WTC11 (cell line): ENCODE measurements at regions of chr1 and their contacts with region 1.

Region 1: DNA sequence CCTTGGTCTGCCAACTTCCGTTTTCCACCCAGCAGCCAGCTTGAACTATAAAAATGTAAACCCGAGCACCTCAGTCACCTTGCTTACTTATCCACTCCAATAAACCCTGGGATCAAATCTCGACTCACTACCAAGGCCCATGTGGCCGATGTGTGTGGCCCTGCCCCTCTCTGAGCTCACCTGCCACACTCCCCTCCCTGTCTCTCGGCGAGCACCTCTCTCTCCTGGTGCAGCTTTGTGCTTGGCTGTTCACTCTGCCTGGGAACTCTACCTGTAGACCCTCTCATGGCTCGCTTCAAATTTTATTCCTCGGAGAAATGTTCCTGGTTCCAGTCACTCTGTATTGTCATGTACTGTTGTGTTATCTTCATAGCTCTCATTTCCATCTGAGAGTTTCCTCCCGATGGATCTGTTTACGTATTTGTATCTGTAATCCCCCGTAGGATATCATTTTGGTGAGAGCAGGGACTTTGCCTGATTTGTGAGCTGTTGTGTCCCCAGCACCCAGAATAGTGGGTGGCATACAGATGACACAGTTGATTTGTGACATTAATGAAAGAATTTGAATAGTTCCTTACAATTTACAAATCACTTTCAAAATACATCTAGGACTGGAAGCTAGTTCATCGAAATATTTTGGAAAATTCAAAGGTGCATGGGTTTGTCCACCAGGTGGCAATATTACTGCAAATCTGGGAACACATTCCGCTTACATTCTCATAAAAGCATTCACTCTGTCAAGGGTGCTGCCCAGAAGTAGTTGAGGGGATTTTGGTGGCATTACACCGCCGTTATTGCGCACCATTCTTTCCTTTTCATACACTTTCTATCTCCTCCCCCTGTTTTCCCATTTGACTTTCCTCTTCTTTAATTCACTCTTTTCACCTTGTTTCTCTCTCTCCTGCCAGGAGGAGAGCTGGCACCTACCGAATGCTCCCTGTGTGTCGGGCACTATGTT is 95.3 kb downstream of the ABCA4 start:
- DNase-seq: no peak
- ATAC-seq: peak; percentile 69
- H3K4me3 Mint-ChIP-seq: no peak overlapping the region
- H3K27ac Mint-ChIP-seq: 0 out of 2 replicates have a peak overlapping the region, but pooled peaks have one; percentile 0
- H3K4me1 Mint-ChIP-seq: peaks cover 36% of the 10 kb centered on the region
- H3K27me3 Mint-ChIP-seq: no peaks in the 10 kb centered on the region; the same call in 1 of the 2 replicates
- CTCF ChIP-seq: peak; percentile 45

Region 2: DNA sequence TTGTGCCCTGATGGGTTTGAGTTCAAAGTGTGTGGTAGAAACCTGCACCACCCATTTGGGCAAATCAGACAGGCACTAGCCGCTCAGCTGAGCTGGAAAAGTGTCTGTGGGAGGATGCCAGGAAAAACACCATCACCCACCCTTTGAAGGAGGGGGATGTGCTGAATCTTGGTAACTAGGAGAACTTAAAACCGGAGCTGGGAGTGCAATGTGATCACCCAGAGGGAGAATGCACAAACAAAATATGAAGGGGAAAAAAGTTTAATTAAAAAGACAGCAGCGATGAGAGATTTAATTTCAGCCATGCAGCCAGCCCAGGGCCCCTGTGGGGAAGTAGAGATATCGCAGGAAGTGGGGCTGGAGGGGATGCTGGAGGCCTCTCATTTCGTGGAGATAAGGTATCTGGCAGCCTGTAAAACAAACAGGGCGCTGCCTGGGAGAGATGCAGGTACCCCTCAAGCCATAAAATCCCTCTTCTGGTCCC is 257.2 kb before region 1 on chr1:
- CTCF ChIA-PET with region 1: no interaction called
- POLR2A ChIA-PET with region 1: no interaction called
- DNase-seq: no peak
- ATAC-seq: peak; percentile 58
- H3K4me3 Mint-ChIP-seq: no peak overlapping the region; the same call in 1 of the 2 replicates
- H3K27ac Mint-ChIP-seq: no peak overlapping the region
- H3K4me1 Mint-ChIP-seq: peaks cover 32% of the 10 kb centered on the region
- H3K27me3 Mint-ChIP-seq: no peaks in the 10 kb centered on the region
- CTCF ChIP-seq: no peak

Region 3: DNA sequence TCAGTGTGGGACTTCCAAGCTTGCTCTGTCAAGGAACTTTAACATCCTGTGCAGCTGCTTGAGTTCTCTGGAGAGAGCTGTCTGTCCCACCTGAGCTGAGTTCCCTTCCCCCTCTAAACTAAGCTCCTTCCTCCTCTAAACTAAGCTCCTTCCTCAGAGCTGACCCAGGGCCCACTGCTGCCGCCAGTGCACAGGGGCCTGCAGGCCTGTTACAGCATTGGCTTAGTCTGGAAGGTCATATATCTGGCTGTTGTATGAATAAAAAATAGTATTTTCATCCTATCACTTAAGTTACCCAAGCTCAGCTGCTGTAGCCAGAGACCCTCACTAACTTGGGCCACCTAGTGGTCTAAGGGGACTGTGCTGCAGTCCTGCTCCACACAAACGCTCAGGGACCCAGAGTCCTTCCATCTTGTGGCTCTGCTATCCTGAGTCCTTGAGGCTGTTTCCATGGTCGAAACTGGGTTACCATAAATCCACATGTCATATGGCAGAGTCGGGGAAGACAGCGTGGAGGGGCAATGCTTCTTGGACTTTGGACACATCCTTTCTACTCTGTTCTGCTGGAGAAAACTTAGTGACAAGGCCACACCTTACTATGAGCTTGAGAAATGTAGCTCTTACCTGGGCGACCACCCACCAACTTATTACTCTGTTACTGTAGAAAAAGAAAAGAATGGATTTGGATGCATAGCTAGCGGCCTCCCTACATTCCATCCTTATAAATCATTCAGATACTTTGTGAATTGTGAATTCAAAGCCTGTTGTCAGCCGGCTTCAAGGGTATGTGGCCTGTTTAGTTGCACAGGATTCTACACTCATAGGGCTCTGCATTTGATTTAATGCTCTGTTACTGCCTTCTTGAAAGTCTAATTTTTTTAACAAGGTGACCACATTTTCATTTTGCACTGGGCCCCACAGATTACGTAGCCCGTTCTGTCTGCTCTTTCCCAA is 45.1 kb before region 1 on chr1:
- CTCF ChIA-PET with region 1: interaction called, 17 read pairs
- POLR2A ChIA-PET with region 1: no interaction called
- DNase-seq: peak; percentile 45
- ATAC-seq: peak; percentile 95
- H3K4me3 Mint-ChIP-seq: no peak overlapping the region
- H3K27ac Mint-ChIP-seq: no peak overlapping the region
- H3K4me1 Mint-ChIP-seq: peaks cover 17% of the 10 kb centered on the region
- H3K27me3 Mint-ChIP-seq: no peaks in the 10 kb centered on the region
- CTCF ChIP-seq: peak; percentile 49

Region 4: GRCh38 chr1:94012686-94013624 is 12.7 kb before region 1 on chr1:
- CTCF ChIA-PET with region 1: interaction called, 24 read pairs
- POLR2A ChIA-PET with region 1: interaction called, 3 read pairs
- DNase-seq: peak; percentile 51
- ATAC-seq: peak; percentile 70
- H3K4me3 Mint-ChIP-seq: peak overlapping the region; percentile 8
- H3K27ac Mint-ChIP-seq: no peak overlapping the region; the same call in 1 of the 2 replicates
- H3K4me1 Mint-ChIP-seq: peaks cover 34% of the 10 kb centered on the region
- H3K27me3 Mint-ChIP-seq: peaks cover 74% of the 10 kb centered on the region
- CTCF ChIP-seq: no peak

Region 5: DNA sequence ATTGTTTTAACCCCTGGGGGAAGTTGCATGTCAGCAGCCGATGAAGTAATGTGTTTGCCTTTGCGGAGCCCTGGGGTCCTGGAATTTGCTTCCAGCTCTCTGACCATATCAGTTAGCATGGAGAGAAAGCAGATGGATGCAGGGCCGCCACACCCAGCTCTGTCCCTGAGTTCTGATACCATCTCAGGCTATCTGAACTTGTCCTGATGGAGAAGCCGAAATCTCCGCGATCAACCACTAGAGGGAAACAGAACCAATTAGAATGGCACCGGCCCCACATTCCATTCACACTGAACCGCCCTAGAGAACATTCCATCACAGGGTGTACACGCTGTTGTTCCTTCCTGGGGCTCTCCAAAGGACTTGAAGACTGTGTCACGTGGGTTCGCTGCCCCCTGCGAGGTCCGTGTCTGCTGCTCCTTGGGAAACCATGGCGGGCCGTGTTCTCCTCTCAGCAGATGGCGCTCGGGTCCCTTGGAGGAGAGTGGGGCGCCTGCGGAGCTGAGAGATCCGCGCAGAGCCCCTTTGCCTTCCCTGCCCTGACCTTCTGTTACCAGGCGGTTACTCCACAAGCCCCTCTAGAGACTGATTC is 19.9 kb after region 1 on chr1:
- CTCF ChIA-PET with region 1: interaction called, 26 read pairs
- POLR2A ChIA-PET with region 1: no interaction called
- DNase-seq: peak; percentile 90
- ATAC-seq: peak; percentile 85
- H3K4me3 Mint-ChIP-seq: peak overlapping the region; percentile 52
- H3K27ac Mint-ChIP-seq: no peak overlapping the region
- H3K4me1 Mint-ChIP-seq: peaks cover 30% of the 10 kb centered on the region
- H3K27me3 Mint-ChIP-seq: no peaks in the 10 kb centered on the region
- CTCF ChIP-seq: peak; percentile 46

Region 6: GRCh38 chr1:94329986-94330385 is 304.3 kb after region 1 on chr1:
- CTCF ChIA-PET with region 1: interaction called, 57 read pairs
- POLR2A ChIA-PET with region 1: no interaction called
- DNase-seq: no peak
- ATAC-seq: peak; percentile 74
- H3K4me3 Mint-ChIP-seq: no peak overlapping the region
- H3K27ac Mint-ChIP-seq: no peak overlapping the region
- H3K4me1 Mint-ChIP-seq: peaks cover 52% of the 10 kb centered on the region
- H3K27me3 Mint-ChIP-seq: peaks cover 4% of the 10 kb centered on the region; the same call in 1 of the 2 replicates
- CTCF ChIP-seq: no peak